Mammary epithelial cell (primary cell): ENCODE measurements at regions of chr7 and their contacts with region 1.

Region 1: GRCh38 chr7:106731187-106731586 is 70.2 kb upstream of the CCDC71L start:
- DNase-seq: no peak
- H3K4me3 ChIP-seq: no peak overlapping the region
- H3K27ac ChIP-seq: peak overlapping the region; percentile 87
- H3K4me1 ChIP-seq: peaks cover 30% of the 10 kb centered on the region
- H3K27me3 ChIP-seq: no peaks in the 10 kb centered on the region
- CTCF ChIP-seq: no peak

Region 2: DNA sequence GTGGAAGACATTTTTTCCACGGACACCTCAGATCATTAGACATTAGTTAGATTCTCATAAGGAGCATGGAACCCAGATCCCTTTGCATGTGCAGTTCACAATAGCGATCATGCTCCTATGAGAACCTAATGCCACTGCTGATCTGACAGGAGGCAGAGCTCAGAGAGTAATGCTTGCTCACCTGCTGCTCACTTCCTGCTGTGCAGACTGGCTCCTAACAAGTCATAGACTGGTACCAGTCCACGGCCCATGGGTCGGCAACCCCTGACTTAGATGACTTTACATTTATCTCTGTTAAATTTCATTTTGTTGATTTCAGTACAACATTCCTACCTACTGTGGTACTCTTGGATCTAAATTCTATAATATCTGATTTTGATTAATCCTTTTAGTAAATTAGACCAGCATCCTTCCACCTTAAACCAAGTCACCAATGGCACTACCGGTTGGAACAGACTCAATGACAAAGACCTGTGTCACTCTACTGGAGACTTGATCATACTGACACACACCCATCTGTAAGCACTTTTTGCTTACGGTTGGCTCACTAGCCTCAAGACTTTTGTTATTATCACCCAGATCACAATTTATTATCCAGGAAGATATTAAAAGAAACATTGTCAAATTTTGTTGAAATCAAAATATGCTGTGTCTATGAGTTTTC is 62.2 kb before region 1 on chr7:
- CTCF ChIA-PET with region 1: no interaction called
- dilution Hi-C with region 1: no loop called
- in situ Hi-C with region 1: loop called (anchors 5 kb)
- intact Hi-C with region 1: no loop called
- DNase-seq: no peak
- H3K4me3 ChIP-seq: no peak overlapping the region
- H3K27ac ChIP-seq: no peak overlapping the region
- H3K4me1 ChIP-seq: no peaks in the 10 kb centered on the region
- H3K27me3 ChIP-seq: no peaks in the 10 kb centered on the region
- CTCF ChIP-seq: no peak

Region 3: GRCh38 chr7:106926532-106927291 is 195.5 kb after region 1 on chr7:
- CTCF ChIA-PET with region 1: no interaction called
- dilution Hi-C with region 1: no loop called
- in situ Hi-C with region 1: no loop called
- intact Hi-C with region 1: no loop called
- DNase-seq: no peak
- H3K4me3 ChIP-seq: no peak overlapping the region
- H3K27ac ChIP-seq: no peak overlapping the region
- H3K4me1 ChIP-seq: no peaks in the 10 kb centered on the region
- H3K27me3 ChIP-seq: no peaks in the 10 kb centered on the region
- CTCF ChIP-seq: no peak